ENCODE measurements at regions of chr2 and their contacts with region 1.

Region 1: GRCh38 chr2:23859983-23860382 is 66.9 kb downstream of the ATAD2B start:
- DNase-seq: no peak
- H3K4me3 ChIP-seq: no peak overlapping the region
- H3K27ac ChIP-seq: no peak overlapping the region
- H3K4me1 ChIP-seq: no peaks in the 10 kb centered on the region
- H3K27me3 ChIP-seq: no peaks in the 10 kb centered on the region
- CTCF ChIP-seq: no peak
- POLR2A ChIP-seq: no peak

Region 2: GRCh38 chr2:22375096-22375495 is 1484.9 kb before region 1 on chr2:
- intact Hi-C with region 1: no loop called
- DNase-seq: no peak
- H3K4me3 ChIP-seq: no peak overlapping the region
- H3K27ac ChIP-seq: no peak overlapping the region
- H3K4me1 ChIP-seq: no peaks in the 10 kb centered on the region
- H3K27me3 ChIP-seq: no peaks in the 10 kb centered on the region
- CTCF ChIP-seq: no peak
- POLR2A ChIP-seq: no peak

Region 3: DNA sequence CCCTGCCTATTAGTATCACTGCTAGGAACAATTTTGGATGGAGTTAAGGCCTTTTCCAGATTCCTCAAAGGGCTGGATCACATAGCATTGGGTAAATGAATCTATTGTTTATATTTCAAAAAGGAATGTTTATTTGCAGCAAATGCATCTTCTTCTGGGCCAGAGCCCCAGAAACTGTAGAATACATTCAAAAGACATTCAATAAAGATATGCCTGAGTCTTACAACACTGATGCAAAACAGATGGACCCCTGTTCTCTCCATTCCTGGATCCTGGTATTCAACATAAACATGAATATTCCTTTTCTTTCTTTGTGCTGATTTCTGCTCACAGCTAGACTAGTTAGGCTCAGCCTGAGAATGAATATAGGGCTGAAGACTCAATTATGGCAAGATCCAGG is 702.2 kb before region 1 on chr2:
- intact Hi-C with region 1: no loop called
- DNase-seq: no peak
- H3K4me3 ChIP-seq: no peak overlapping the region
- H3K27ac ChIP-seq: no peak overlapping the region
- H3K4me1 ChIP-seq: no peaks in the 10 kb centered on the region
- H3K27me3 ChIP-seq: no peaks in the 10 kb centered on the region
- CTCF ChIP-seq: no peak
- POLR2A ChIP-seq: no peak

Region 4: GRCh38 chr2:23809150-23809549 is 50.8 kb before region 1 on chr2:
- intact Hi-C with region 1: no loop called
- DNase-seq: no peak
- H3K4me3 ChIP-seq: no peak overlapping the region
- H3K27ac ChIP-seq: no peak overlapping the region
- H3K4me1 ChIP-seq: no peaks in the 10 kb centered on the region
- H3K27me3 ChIP-seq: no peaks in the 10 kb centered on the region
- CTCF ChIP-seq: no peak
- POLR2A ChIP-seq: no peak

Region 5: GRCh38 chr2:24456599-24457556 is 596.9 kb after region 1 on chr2:
- intact Hi-C with region 1: no loop called
- DNase-seq: no peak
- H3K4me3 ChIP-seq: no peak overlapping the region
- H3K27ac ChIP-seq: peak overlapping the region; percentile 8 to 78
- H3K4me1 ChIP-seq: peaks cover 0 to 4% of the 10 kb centered on the region in 2 donors
- H3K27me3 ChIP-seq: no peaks in the 10 kb centered on the region
- CTCF ChIP-seq: no peak
- POLR2A ChIP-seq: no peak

Region 6: DNA sequence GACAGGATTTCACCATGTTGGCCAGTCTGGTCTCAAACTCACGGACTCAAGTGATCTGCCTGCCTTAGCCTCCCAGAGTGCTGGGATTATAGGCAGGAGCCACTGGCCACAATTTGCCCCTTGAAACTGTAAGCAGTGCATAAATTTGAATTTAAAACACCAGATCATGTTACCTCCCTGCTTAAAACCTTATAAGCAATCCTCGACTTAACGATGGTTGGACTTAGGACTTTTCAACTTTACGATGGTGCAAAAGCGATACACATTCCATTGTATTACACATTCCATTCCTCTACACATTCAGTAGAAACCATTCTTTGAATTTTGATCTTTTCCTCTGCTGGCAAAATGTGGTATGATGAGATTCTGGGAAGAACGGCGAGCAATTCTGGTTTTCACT is 1158.7 kb after region 1 on chr2:
- intact Hi-C with region 1: loop called (anchors 5 kb)
- DNase-seq: no peak
- H3K4me3 ChIP-seq: no peak overlapping the region
- H3K27ac ChIP-seq: no peak overlapping the region
- H3K4me1 ChIP-seq: no peaks in the 10 kb centered on the region
- H3K27me3 ChIP-seq: no peaks in the 10 kb centered on the region
- CTCF ChIP-seq: no peak
- POLR2A ChIP-seq: no peak

Measured in breast epithelium (tissue), 4 donors.